Activated CD8-positive, alpha-beta T cell treated with anti-CD3 and anti-CD28 coated beads for 36 hours (primary cell): ENCODE measurements at regions of chrX and their contacts with region 1.

Region 1: GRCh38 chrX:138745196-138745595 is 33.7 kb upstream of the FGF13 start:
- DNase-seq: peak; percentile 3
- ATAC-seq: no peak
- H3K4me3 Mint-ChIP-seq: no peak overlapping the region
- H3K27ac Mint-ChIP-seq: no peak overlapping the region
- H3K4me1 Mint-ChIP-seq: no peaks in the 10 kb centered on the region
- H3K27me3 Mint-ChIP-seq: no peaks in the 10 kb centered on the region
- CTCF ChIP-seq: peak; percentile 54

Region 2: GRCh38 chrX:138128027-138128671 is 617.0 kb before region 1 on chrX:
- CTCF ChIA-PET with region 1: interaction called, 3 read pairs
- POLR2A ChIA-PET with region 1: no interaction called
- intact Hi-C with region 1: loop called (anchors 5 kb)
- DNase-seq: no peak
- ATAC-seq: peak; percentile 45
- H3K4me3 Mint-ChIP-seq: no peak overlapping the region
- H3K27ac Mint-ChIP-seq: no peak overlapping the region
- H3K4me1 Mint-ChIP-seq: no peaks in the 10 kb centered on the region
- H3K27me3 Mint-ChIP-seq: no peaks in the 10 kb centered on the region
- CTCF ChIP-seq: peak; percentile 29

Region 3: DNA sequence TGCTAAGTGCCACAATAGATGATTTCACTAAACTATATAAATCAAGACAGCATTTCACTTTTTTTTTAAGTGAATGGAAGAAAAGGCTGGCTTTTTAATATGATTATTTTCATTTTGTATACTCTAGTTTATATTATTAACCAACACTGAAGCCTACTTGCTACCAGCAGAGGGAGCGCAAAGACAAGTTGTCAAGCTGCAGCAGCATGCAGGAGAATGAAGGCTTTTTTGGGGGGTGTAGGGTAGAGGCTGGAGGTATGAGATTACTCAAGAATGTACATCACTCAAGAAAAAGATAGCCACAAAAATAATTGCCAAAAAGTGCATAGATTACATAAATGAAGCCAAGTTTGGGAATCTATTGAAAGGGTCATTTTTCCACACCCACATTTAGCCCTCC is 553.2 kb before region 1 on chrX:
- CTCF ChIA-PET with region 1: no interaction called
- POLR2A ChIA-PET with region 1: no interaction called
- intact Hi-C with region 1: loop called (anchors 10 kb)
- DNase-seq: peak; percentile 12
- ATAC-seq: no peak
- H3K4me3 Mint-ChIP-seq: no peak overlapping the region
- H3K27ac Mint-ChIP-seq: no peak overlapping the region
- H3K4me1 Mint-ChIP-seq: no peaks in the 10 kb centered on the region
- H3K27me3 Mint-ChIP-seq: no peaks in the 10 kb centered on the region
- CTCF ChIP-seq: no peak

Region 4: GRCh38 chrX:138765051-138765450 is 19.9 kb after region 1 on chrX:
- CTCF ChIA-PET with region 1: no interaction called
- POLR2A ChIA-PET with region 1: no interaction called
- intact Hi-C with region 1: no loop called
- DNase-seq: no peak
- ATAC-seq: no peak
- H3K4me3 Mint-ChIP-seq: no peak overlapping the region
- H3K27ac Mint-ChIP-seq: no peak overlapping the region
- H3K4me1 Mint-ChIP-seq: no peaks in the 10 kb centered on the region
- H3K27me3 Mint-ChIP-seq: no peaks in the 10 kb centered on the region
- CTCF ChIP-seq: no peak

Region 5: GRCh38 chrX:138872537-138872936 is 127.3 kb after region 1 on chrX:
- CTCF ChIA-PET with region 1: no interaction called
- POLR2A ChIA-PET with region 1: no interaction called
- intact Hi-C with region 1: no loop called
- DNase-seq: no peak
- ATAC-seq: no peak
- H3K4me3 Mint-ChIP-seq: no peak overlapping the region
- H3K27ac Mint-ChIP-seq: no peak overlapping the region
- H3K4me1 Mint-ChIP-seq: no peaks in the 10 kb centered on the region
- H3K27me3 Mint-ChIP-seq: no peaks in the 10 kb centered on the region
- CTCF ChIP-seq: no peak

Region 6: GRCh38 chrX:138886769-138887168 is 141.6 kb after region 1 on chrX:
- CTCF ChIA-PET with region 1: no interaction called
- POLR2A ChIA-PET with region 1: no interaction called
- intact Hi-C with region 1: no loop called
- DNase-seq: no peak
- ATAC-seq: no peak
- H3K4me3 Mint-ChIP-seq: no peak overlapping the region
- H3K27ac Mint-ChIP-seq: no peak overlapping the region
- H3K4me1 Mint-ChIP-seq: no peaks in the 10 kb centered on the region
- H3K27me3 Mint-ChIP-seq: no peaks in the 10 kb centered on the region
- CTCF ChIP-seq: no peak